Dendritic cell treated with granulocyte-macrophage colony-stimulating factor and Interleukin-4, amounts not matched to agents 40 ng/mL and 50 ng/mL, for 4 days (primary cell): ENCODE measurements at regions of chr5 and their contacts with region 1.

Region 1: GRCh38 chr5:73088026-73088425 is 32.3 kb upstream of the TMEM171 start:
- H3K4me3 Mint-ChIP-seq: no peak overlapping the region
- H3K27ac Mint-ChIP-seq: no peak overlapping the region
- H3K4me1 Mint-ChIP-seq: no peaks in the 10 kb centered on the region
- H3K27me3 Mint-ChIP-seq: no peaks in the 10 kb centered on the region

Region 2: DNA sequence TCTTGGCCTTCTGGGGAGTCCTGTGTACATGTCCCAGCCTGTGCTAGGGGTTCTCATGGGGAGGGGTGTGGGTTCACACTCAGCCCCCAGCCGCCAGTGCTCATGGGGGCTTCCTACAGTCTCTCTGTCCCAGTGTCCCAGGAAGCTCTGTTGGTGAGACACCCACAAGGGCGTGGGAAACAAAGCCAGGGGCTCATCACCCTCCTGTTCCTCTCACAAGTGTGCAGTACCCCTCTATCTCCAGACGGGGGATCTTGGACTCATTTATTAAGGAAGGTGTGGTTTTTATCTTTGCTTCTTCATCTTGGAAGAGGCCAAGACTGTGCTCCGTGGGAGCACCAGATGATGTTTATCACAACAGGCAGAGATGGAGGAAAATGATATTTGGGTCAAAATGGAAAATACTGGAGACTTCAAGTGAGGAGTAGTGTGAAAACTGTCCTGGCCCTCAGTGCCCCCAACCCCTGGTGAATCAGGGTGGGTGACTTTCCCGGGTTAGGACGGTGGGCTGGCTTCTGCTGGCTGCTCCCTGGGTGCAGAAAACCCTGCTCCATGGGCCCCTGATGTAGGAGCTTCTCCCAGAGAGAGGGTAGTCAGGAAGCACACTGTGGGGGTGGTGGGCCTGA is 47.5 kb after region 1 on chr5:
- intact Hi-C with region 1: no loop called
- H3K4me3 Mint-ChIP-seq: no peak overlapping the region
- H3K27ac Mint-ChIP-seq: no peak overlapping the region
- H3K4me1 Mint-ChIP-seq: no peaks in the 10 kb centered on the region
- H3K27me3 Mint-ChIP-seq: peaks cover 67% of the 10 kb centered on the region

Region 3: GRCh38 chr5:73201547-73202513 is 113.8 kb after region 1 on chr5:
- intact Hi-C with region 1: loop called (anchors 10 kb)
- H3K4me3 Mint-ChIP-seq: no peak overlapping the region
- H3K27ac Mint-ChIP-seq: no peak overlapping the region
- H3K4me1 Mint-ChIP-seq: peaks cover 10% of the 10 kb centered on the region
- H3K27me3 Mint-ChIP-seq: peaks cover 53% of the 10 kb centered on the region

Region 4: GRCh38 chr5:73454351-73455036 is 366.5 kb after region 1 on chr5:
- intact Hi-C with region 1: loop called (anchors 10 kb)
- H3K4me3 Mint-ChIP-seq: no peak overlapping the region
- H3K27ac Mint-ChIP-seq: no peak overlapping the region
- H3K4me1 Mint-ChIP-seq: peaks cover 12% of the 10 kb centered on the region
- H3K27me3 Mint-ChIP-seq: peaks cover 77% of the 10 kb centered on the region